ENCODE measurements at regions of chr13 and their contacts with region 1.

Region 1: GRCh38 chr13:76473552-76474134 is 412.6 kb downstream of the KCTD12 start:
- H3K4me3 ChIP-seq: no peak overlapping the region
- H3K27ac ChIP-seq: no peak overlapping the region
- H3K4me1 ChIP-seq: no peaks in the 10 kb centered on the region
- CTCF ChIP-seq: no peak

Region 2: GRCh38 chr13:75870397-75870903 is 603.2 kb before region 1 on chr13:
- CTCF ChIA-PET with region 1: interaction called, 37 read pairs
- POLR2A ChIA-PET with region 1: no interaction called
- H3K4me3 ChIP-seq: no peak overlapping the region
- H3K27ac ChIP-seq: no peak overlapping the region
- H3K4me1 ChIP-seq: no peaks in the 10 kb centered on the region
- CTCF ChIP-seq: no peak

Region 3: GRCh38 chr13:75876360-75877050 is 597.1 kb before region 1 on chr13:
- CTCF ChIA-PET with region 1: interaction called, 37 read pairs
- POLR2A ChIA-PET with region 1: no interaction called
- H3K4me3 ChIP-seq: no peak overlapping the region
- H3K27ac ChIP-seq: no peak overlapping the region
- H3K4me1 ChIP-seq: no peaks in the 10 kb centered on the region
- CTCF ChIP-seq: peak; percentile 25; the same call in 1 of the 2 replicates

Region 4: DNA sequence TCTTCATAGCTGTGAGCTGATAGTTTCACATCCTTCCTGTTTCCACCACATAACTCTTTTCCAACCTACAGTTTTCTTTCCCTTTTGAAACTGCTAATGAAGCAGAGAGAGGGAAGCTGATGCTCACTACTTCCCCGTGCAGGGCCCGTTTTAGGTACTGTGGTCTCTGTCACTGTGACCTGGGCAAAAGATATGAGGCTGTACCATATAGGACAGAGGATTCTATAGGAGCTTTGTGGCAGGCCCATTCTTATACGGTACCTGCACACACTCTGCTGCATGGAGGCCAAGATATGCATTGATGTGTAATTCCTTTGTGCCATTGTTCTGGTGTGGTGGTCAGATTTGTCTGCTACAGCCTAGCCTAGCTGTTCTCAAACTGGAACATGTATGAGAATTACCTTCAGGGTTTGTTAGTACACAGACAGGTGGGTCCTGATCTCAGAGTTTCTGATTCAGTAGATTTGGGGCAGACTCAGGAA is 260.2 kb before region 1 on chr13:
- CTCF ChIA-PET with region 1: no interaction called
- POLR2A ChIA-PET with region 1: no interaction called
- H3K4me3 ChIP-seq: no peak overlapping the region
- H3K27ac ChIP-seq: no peak overlapping the region
- H3K4me1 ChIP-seq: no peaks in the 10 kb centered on the region
- CTCF ChIP-seq: no peak

Region 5: DNA sequence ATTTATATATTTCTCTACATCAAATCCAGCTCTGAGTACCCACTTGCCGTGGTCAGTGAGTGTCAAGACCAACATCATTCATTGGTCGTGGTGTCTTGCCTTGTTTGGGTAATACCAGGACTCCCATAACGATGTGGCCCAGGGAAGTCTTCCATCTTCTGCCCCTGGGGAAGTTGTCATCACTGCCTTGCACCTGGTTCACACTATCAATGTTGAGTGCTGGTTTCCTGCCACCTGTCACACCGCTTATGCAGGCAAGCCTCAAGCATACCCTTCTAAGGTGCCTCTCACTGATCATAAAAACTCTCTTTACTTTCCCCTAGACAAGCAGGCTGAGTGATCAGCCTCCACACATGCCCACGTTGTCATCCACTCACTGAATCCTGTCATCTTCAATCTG is 30.1 kb after region 1 on chr13:
- CTCF ChIA-PET with region 1: no interaction called
- POLR2A ChIA-PET with region 1: no interaction called
- H3K4me3 ChIP-seq: no peak overlapping the region
- H3K27ac ChIP-seq: no peak overlapping the region
- H3K4me1 ChIP-seq: no peaks in the 10 kb centered on the region
- CTCF ChIP-seq: no peak

Region 6: GRCh38 chr13:76656500-76656899 is 182.9 kb after region 1 on chr13:
- CTCF ChIA-PET with region 1: no interaction called
- POLR2A ChIA-PET with region 1: no interaction called
- H3K4me3 ChIP-seq: no peak overlapping the region
- H3K27ac ChIP-seq: no peak overlapping the region
- H3K4me1 ChIP-seq: no peaks in the 10 kb centered on the region
- CTCF ChIP-seq: no peak